Cardiac septum (tissue), 1 donor: ENCODE measurements at regions of chr6 and their contacts with region 1.

Region 1: DNA sequence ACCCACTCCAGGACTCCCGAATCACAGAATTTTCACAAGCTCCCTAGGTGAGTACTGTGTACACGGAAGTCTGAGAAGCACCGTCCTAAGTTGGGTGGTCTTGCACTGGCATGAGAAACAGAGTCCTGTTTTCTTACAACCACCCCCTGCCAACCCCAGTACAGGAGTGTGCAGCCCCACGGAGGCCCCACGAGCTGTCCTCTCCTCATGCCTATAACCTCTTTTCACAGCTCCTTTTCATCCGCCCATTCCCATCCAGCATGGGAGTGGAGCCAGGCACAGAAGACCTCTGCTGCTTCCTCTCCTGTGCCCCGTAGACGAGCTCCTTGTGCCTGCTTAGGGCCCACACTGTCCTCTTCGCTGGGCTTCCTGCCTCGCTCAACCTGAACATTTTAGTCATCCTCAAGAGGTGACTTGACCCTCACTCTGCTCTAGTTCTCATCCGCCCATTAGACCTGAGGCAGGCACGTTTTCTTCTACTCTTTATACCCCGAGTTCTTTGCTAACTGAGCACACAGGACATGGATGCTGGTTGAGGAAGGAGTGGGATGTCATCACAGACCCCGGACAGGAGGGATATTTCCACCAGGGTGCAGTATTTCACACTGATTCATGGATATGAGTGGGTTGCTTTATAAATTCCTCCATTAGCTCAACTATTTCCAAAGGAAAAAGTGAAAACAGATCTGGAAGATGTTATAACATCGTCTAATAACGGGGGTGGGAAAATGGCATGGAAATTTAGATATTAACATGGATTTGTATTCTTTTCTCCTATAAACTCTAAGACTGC is 160.5 kb downstream of the TTLL2 start:
- DNase-seq: no peak

Region 2: GRCh38 chr6:167683028-167683862 is 197.9 kb after region 1 on chr6:
- intact Hi-C with region 1: loop called (anchors 5 kb)
- DNase-seq: peak; percentile 87

Region 3: GRCh38 chr6:167898673-167899311 is 413.4 kb after region 1 on chr6:
- intact Hi-C with region 1: loop called (anchors 2 kb)
- DNase-seq: no peak